ENCODE measurements at regions of chr11 and their contacts with region 1.

Region 1: GRCh38 chr11:18634140-18635032 is at the start of gene SPTY2D1:
- DNase-seq: peak; percentile 99 to 100
- ATAC-seq: peak; percentile 99 to 100 (median 100)
- H3K4me3 ChIP-seq: peak within 1 kb of the TSS; percentile 65 to 96 (median 81)
- H3K27ac ChIP-seq: peak within 1 kb of the TSS; percentile 83 to 96 (median 94)
- H3K4me1 ChIP-seq: peaks cover 4 to 37% (median 13%) of the 10 kb centered on the region in 9 donors
- H3K27me3 ChIP-seq: no peaks in the 10 kb centered on the region
- CTCF ChIP-seq: peak in 2 of 9 donors; percentile 14 to 20
- total RNA-seq, gene SPTY2D1: 7.3 to 18.8 (median 10.2) TPM

Region 2: GRCh38 chr11:18321980-18322711 is 312.2 kb before region 1 on chr11 and contains the starts of genes GTF2H1 and HPS5:
- intact Hi-C with region 1: loop called in 4 of 10 experiments (anchors 2 to 10 kb)
- DNase-seq: peak; percentile 92 to 97
- ATAC-seq: peak; percentile 98 to 100 (median 99)
- H3K4me3 ChIP-seq: peak within 1 kb of the TSS; percentile 70 to 93 (median 84)
- H3K27ac ChIP-seq: peak within 1 kb of the TSS; percentile 93 to 99 (median 96)
- H3K4me1 ChIP-seq: peaks cover 0 to 59% (median 45%) of the 10 kb centered on the region in 9 donors
- H3K27me3 ChIP-seq: no peaks in the 10 kb centered on the region
- CTCF ChIP-seq: no peak
- total RNA-seq, gene GTF2H1: 19.6 to 27.9 (median 25.2) TPM
- total RNA-seq, gene HPS5: 9.9 to 14.9 (median 12.5) TPM

Region 3: GRCh38 chr11:18698341-18699268 is 64.2 kb after region 1 on chr11 and contains the start of gene TMEM86A:
- intact Hi-C with region 1: loop called in 7 of 10 experiments (anchors 1 to 10 kb)
- DNase-seq: peak; percentile 92 to 95
- ATAC-seq: peak; percentile 91 to 95 (median 94)
- H3K4me3 ChIP-seq: peak within 1 kb of the TSS; percentile 57 to 92 (median 79)
- H3K27ac ChIP-seq: peak within 1 kb of the TSS in 9 of 10 donors; percentile 74 to 93 (median 90)
- H3K4me1 ChIP-seq: peaks cover 5 to 43% (median 20%) of the 10 kb centered on the region in 9 donors
- H3K27me3 ChIP-seq: no peaks in the 10 kb centered on the region
- CTCF ChIP-seq: no peak
- total RNA-seq, gene TMEM86A: 3.5 to 9.3 (median 5.9) TPM

Region 4: DNA sequence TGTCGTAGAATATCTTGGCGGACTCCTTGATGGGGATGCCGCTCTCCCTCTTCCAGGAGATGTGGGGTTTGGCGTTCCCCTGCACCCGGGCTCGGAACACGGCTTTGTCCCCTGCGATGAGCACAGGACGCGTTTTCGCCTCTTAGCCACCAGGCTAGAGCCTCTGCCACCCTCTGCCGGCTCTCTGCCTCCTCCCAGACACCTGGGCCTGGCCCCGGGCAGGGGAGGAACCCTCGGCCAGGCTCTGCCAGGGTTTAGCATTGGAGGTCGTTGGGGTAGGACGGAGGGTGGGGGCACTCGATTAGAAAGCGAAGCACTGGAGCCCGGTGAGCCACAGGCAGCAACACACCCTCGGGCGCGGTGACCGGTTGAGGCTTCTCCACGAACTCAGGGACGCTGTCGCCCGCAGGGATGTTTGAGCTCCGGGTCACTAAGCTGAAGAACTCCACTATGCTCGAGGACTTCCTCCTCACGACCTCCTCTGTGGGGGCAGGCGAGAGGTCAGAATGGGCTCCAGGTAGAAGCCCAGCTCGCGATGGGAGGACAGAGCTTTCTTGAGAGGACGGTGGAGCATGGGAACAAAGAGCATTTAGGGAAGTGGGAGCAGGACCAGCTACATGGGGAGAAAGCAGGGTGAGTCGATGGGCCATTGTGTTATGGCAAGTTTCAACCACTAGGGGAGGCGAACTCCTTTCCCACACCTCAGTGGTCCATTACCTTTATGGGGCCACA is 87.3 kb after region 1 on chr11:
- intact Hi-C with region 1: loop called in 1 of 10 experiments (anchors 5 kb)
- DNase-seq: peak; percentile 26 to 40
- ATAC-seq: peak; percentile 54 to 83 (median 70)
- H3K4me3 ChIP-seq: peak overlapping the region; percentile 33 to 72 (median 61)
- H3K27ac ChIP-seq: peak overlapping the region in 9 of 10 donors; percentile 33 to 63 (median 47)
- H3K4me1 ChIP-seq: peaks cover 0 to 18% (median 10%) of the 10 kb centered on the region in 9 donors
- H3K27me3 ChIP-seq: no peaks in the 10 kb centered on the region
- CTCF ChIP-seq: peak; percentile 61 to 87 (median 71)

Region 5: GRCh38 chr11:18768472-18768901 is 134.1 kb after region 1 on chr11:
- intact Hi-C with region 1: no loop called
- DNase-seq: no peak
- ATAC-seq: peak in 4 of 8 donors; percentile 32 to 71 (median 47)
- H3K4me3 ChIP-seq: no peak overlapping the region
- H3K27ac ChIP-seq: no peak overlapping the region
- H3K4me1 ChIP-seq: peaks cover 0 to 17% (median 4%) of the 10 kb centered on the region in 9 donors
- H3K27me3 ChIP-seq: no peaks in the 10 kb centered on the region
- CTCF ChIP-seq: no peak

Region 6: GRCh38 chr11:18802381-18803257 is 168.2 kb after region 1 on chr11:
- intact Hi-C with region 1: no loop called
- DNase-seq: peak in 1 of 2 donors; percentile 49
- ATAC-seq: peak in 3 of 8 donors; percentile 27 to 65 (median 31)
- H3K4me3 ChIP-seq: no peak overlapping the region
- H3K27ac ChIP-seq: no peak overlapping the region
- H3K4me1 ChIP-seq: peaks cover 0 to 7% (median 0%) of the 10 kb centered on the region in 9 donors
- H3K27me3 ChIP-seq: peaks cover 0 to 9% (median 0%) of the 10 kb centered on the region in 7 donors
- CTCF ChIP-seq: peak; percentile 18 to 72 (median 61)